ENCODE measurements at regions of chr1 and their contacts with region 1.

Region 1: DNA sequence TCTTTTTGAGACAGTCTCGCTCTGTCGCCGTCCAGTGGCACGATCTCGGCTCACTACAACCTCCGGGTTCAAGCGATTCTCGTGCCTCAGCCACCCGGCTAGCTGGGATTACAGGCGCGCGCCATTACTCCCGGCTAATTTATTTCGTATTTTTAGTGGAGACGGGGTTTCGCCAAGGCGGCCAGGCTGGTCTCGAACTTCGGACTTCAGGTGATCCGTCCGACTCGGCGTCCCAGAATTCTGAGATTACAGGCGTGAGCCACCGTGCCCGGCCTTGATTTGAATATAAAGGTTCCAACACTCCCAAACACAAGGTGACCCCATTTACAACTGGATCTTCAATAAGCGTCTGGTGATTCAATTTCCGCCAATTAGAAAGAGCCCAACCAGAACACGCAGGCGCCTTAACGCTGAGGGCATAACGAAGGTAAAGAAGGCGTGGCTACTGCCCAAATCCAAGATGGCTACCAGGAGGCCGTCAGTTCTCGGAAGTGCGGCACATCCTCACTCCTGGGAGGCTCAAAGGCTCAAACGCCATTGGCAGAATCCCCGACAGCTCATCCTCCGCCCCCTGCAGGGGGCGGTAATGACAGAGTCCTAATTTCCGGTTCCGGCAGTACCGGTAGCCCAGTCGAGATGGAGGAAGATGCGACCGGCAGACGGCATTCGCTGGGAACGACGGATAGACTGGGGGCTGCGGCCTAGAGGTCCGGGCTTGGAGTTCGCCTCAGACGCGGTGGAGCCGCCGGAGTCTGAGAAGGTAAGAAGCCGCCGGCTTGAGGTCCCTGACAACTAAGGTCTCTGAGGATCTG is at the start of gene SLC25A44:
- DNase-seq: peak; percentile 92 to 99 (median 97)

Region 2: DNA sequence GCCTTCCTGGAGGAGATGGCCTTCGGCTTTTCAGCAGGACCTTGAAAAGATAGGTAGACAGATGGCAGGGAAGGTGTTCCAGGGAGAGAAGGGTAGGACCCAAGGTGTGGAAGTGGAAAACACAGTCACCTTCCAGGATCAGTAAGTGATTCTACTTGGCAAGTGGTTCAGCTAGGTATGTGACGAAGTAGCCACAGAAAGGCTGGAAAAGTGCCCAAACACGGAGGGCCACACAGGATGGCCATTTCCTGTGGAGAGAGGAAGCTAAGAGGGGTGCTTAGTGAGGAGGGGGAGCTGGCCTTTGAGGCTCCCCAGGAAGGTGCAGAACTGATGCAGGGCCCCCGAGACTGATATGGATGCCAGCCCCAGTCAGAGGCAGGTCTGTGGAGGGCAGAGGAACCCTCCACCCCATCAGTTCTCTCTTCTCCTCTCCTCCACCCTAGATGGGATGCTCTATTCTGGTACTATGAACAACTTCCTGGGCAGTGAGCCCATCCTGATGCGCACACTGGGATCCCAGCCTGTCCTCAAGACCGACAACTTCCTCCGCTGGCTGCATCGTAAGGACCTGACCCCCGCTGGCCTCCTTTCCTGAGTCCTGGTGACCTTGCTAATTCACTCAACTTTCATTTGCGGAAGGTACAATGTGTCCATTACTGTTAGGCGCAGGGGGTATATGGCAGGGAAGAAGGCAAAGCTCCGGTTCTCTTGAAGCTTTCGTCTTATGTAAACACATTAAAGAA is 33.5 kb before region 1 on chr1:
- intact Hi-C with region 1: loop called (anchors 5 kb)
- DNase-seq: no peak

Measured in head of caudate nucleus (tissue), 42 donors.